MCF 10A (cell line): ENCODE measurements at regions of chr22 and their contacts with region 1.

Region 1: DNA sequence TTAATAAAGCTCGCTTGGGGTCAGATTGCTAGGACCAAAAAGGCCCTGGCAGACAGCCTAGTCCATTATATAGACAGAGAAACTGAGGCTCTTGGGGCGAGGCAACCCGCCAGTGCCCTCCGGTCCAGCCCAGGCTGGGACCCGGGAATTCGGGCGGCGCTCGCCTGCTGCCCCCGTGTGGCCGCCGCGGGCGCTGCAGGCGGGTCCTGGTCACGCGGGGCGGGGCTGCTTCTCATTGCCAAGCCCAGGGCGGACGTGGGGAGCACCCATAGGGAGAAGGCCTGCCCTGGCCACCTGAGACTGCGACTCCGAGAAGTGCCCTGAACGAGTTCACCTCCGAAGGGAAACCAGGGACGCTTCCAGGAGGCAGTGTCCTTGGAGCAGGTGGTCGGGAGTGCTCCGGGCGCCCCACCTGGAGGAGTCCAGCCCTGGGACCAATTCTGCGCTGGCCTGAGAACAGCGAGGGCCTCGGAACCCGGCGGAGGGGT is 36.0 kb upstream of the CSNK1E start:
- DNase-seq: peak; percentile 65
- H3K4me3 Mint-ChIP-seq: no peak overlapping the region
- H3K27ac Mint-ChIP-seq: peak overlapping the region; percentile 64
- H3K4me1 Mint-ChIP-seq: peaks cover 9% of the 10 kb centered on the region
- H3K27me3 Mint-ChIP-seq: no peaks in the 10 kb centered on the region
- CTCF ChIP-seq: peak; percentile 97

Region 2: DNA sequence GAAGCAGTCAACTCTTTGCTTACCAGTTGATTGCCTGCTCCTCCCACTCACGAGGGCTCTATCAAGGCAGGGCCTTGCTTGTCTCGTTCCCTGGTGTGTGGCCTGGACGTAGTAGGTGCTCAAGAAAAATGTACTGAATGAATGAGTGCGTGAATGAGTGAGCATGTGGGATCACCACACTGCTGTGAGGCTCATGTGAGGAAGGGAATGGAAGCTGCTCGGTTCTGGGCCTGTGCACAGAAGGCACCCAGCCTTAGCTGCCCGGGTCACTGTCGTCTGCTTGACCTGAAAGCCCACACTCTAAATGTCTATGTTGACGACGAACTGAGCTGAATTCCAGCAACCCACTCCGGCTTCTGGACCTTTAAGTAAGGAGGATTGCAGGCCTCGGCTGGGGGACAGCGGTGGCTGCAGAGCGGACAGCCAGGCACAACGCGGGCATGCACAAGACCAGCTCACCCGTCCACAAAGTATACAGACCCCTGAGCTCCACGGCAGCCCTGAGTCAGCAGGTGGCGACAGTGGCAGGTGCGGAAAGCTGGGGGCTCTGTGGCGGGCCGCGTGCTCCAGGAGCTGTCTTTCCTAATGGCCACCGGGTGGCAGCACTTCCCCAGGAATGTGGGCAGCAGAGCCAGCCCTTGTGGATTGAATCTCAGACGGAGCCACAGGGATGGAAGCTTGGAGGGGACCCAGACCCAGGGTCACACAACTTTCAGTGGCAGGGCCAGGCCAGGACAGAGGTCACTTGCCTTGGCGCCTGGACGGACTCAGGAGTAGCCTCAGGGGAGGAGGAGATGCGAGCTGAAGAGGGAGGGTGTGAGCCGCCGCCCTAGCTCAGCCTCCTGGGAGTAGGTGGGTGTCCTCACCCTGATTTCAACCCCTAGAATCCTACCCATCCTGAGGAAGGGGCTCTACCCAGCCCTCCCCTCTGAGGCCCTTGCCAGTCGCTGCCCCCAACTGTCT is 301.0 kb before region 1 on chr22:
- CTCF ChIA-PET with region 1: interaction called, 6 read pairs
- POLR2A ChIA-PET with region 1: interaction called, 8 read pairs
- intact Hi-C with region 1: loop called (anchors 1 kb)
- DNase-seq: peak; percentile 83
- H3K4me3 Mint-ChIP-seq: no peak overlapping the region
- H3K27ac Mint-ChIP-seq: no peak overlapping the region
- H3K4me1 Mint-ChIP-seq: peaks cover 5% of the 10 kb centered on the region
- H3K27me3 Mint-ChIP-seq: no peaks in the 10 kb centered on the region
- CTCF ChIP-seq: peak; percentile 93

Region 3: DNA sequence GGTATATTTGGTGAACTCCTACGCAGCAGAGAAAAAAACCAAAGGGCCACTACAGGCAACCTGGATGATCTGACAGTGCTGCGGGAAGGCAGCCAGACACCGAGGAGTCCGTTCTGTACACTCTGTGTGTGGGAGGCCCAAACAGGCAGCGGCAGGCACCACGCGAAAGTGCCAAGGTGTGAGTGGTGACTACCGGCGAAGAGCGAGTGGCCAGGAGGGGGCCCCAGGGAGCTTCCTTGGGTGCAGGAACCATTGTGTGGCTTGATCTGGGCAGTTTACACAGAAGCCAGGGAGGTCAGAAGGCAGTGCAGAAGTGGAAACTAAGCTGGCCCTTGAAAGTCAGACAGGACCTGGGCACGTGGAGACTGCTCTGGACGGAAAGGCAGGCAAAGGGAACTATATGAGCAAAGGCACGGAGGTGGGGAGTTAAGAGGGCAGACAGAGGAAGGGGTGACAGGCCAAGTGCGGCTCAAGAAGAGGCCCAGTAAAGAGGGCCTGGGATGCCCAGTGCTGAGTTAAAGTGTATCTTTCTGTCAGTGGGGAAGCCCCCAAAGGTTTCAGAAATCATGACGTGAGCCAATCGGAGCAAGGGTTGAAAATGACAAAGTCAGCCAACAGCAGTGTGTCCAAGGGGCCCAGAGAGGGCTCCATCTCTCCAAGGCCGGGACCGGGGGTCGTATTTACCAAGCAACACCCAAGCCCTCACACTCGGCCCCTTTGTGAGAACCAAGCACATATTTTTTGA is 91.0 kb before region 1 on chr22:
- CTCF ChIA-PET with region 1: interaction called, 5 read pairs
- POLR2A ChIA-PET with region 1: no interaction called
- intact Hi-C with region 1: loop called (anchors 2 kb)
- DNase-seq: peak; percentile 78
- H3K4me3 Mint-ChIP-seq: no peak overlapping the region
- H3K27ac Mint-ChIP-seq: peak overlapping the region; percentile 63
- H3K4me1 Mint-ChIP-seq: peaks cover 14% of the 10 kb centered on the region
- H3K27me3 Mint-ChIP-seq: no peaks in the 10 kb centered on the region
- CTCF ChIP-seq: peak; percentile 48

Region 4: DNA sequence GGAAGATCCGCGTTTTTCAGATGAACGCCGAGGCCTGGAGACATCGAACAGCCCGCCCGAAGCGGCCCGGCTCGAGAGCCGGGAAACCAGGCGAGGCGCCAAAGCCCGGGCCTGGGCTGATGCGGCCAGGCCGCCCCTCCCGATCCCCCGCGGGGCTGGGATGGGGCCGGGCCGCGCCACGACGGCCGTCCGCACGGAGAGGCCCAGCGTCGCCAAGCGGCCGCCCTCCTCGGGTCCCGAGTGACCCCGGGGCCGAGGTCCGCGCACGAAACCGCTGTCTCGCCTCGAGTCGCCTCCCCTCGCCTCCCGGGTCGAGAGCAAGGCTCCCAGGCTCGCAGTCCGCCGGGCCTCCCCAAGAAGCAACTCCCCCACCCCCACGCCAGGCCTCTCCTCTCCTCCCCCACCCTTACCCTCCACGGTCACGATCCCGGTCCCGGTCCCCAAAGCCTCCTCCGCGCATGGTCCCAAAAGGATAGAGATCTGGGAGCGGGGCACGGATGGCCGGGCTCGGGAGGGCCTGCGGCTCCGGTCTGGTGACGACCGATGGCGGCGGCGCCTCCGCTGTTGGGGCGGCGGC is 152.4 kb after region 1 on chr22:
- CTCF ChIA-PET with region 1: no interaction called
- POLR2A ChIA-PET with region 1: no interaction called
- intact Hi-C with region 1: no loop called
- DNase-seq: peak; percentile 62
- H3K4me3 Mint-ChIP-seq: peak overlapping the region; percentile 81
- H3K27ac Mint-ChIP-seq: peak overlapping the region; percentile 99
- H3K4me1 Mint-ChIP-seq: peaks cover 24% of the 10 kb centered on the region
- H3K27me3 Mint-ChIP-seq: no peaks in the 10 kb centered on the region
- CTCF ChIP-seq: no peak